H1 (cell line): ENCODE measurements at regions of chr1 and their contacts with region 1.

Region 1: GRCh38 chr1:229258031-229258756 is 12.7 kb upstream of the RAB4A start:
- DNase-seq: peak in 1 of 2 experiments; percentile 75
- H3K4me3 ChIP-seq: no peak overlapping the region
- H3K27ac ChIP-seq: no peak overlapping the region
- H3K4me1 ChIP-seq: peaks cover 0 to 7% (median 2%) of the 10 kb centered on the region in 4 experiments; a peak in 4 of 7 replicates
- H3K27me3 ChIP-seq: no peaks in the 10 kb centered on the region
- CTCF ChIP-seq: peak; percentile 39 to 70 (median 66)
- EP300 ChIP-seq: no peak
- POLR2A ChIP-seq: no peak
- RAD21 ChIP-seq: peak; percentile 89 to 90

Region 2: GRCh38 chr1:228664399-228664914 is 593.7 kb before region 1 on chr1:
- CTCF ChIA-PET with region 1: interaction called, 33 read pairs
- POLR2A ChIA-PET with region 1: interaction called, 3 read pairs
- DNase-seq: peak; percentile 53 to 91
- H3K4me3 ChIP-seq: no peak overlapping the region
- H3K27ac ChIP-seq: no peak overlapping the region
- H3K4me1 ChIP-seq: peaks cover 0 to 2% (median 0%) of the 10 kb centered on the region in 4 experiments; a peak in 1 of 7 replicates
- H3K27me3 ChIP-seq: no peaks in the 10 kb centered on the region
- CTCF ChIP-seq: peak; percentile 34 to 71 (median 64)
- EP300 ChIP-seq: no peak
- POLR2A ChIP-seq: no peak
- RAD21 ChIP-seq: peak; percentile 90 to 94

Region 3: DNA sequence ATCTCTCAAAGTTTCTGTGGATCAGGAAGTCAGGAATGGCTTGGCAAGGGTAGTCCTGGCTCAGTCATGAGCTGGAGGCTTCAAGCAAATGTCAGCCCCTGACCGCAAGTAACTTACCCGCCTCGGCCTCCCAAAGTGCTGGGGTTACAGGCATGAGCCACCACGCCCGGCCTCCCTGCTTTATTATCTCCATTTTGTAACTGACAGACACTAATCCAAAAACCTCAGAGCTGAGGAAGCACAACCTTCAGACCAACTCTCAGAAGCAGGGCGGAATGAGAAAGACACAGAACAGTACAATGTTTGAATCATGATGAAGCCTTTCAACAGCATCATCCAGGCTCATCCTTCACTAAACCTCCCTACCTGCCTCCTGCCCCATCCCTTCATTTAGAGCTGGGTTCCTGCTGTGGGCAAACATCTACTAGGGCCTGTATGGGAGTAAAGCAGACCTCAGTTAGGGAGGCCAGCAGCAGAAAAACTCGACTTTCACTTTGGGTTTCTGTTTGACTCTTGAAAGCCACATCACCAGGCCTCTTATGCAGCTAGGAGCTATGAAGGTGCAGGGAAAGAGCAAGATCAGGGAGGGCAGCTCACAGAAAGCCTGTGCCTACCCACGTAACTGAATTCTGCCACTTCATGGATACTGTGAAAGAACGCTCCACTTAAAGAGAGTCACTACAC is 71.7 kb before region 1 on chr1:
- CTCF ChIA-PET with region 1: no interaction called
- POLR2A ChIA-PET with region 1: no interaction called
- DNase-seq: no peak
- H3K4me3 ChIP-seq: no peak overlapping the region
- H3K27ac ChIP-seq: no peak overlapping the region
- H3K4me1 ChIP-seq: peaks cover 0 to 11% (median 7%) of the 10 kb centered on the region in 4 experiments; a peak in 4 of 7 replicates
- H3K27me3 ChIP-seq: no peaks in the 10 kb centered on the region
- CTCF ChIP-seq: no peak
- EP300 ChIP-seq: no peak
- POLR2A ChIP-seq: no peak
- RAD21 ChIP-seq: no peak

Region 4: GRCh38 chr1:229238674-229239415 is 19.3 kb before region 1 on chr1:
- CTCF ChIA-PET with region 1: interaction called, 11 read pairs
- POLR2A ChIA-PET with region 1: no interaction called
- DNase-seq: peak in 1 of 2 experiments; percentile 45
- H3K4me3 ChIP-seq: no peak overlapping the region
- H3K27ac ChIP-seq: no peak overlapping the region
- H3K4me1 ChIP-seq: peaks cover 1 to 10% (median 6%) of the 10 kb centered on the region in 4 experiments; a peak in 3 of 7 replicates
- H3K27me3 ChIP-seq: no peaks in the 10 kb centered on the region
- CTCF ChIP-seq: no peak
- EP300 ChIP-seq: no peak
- POLR2A ChIP-seq: no peak
- RAD21 ChIP-seq: no peak

Region 5: GRCh38 chr1:229388876-229389580 is 130.8 kb after region 1 on chr1:
- CTCF ChIA-PET with region 1: no interaction called
- POLR2A ChIA-PET with region 1: no interaction called
- DNase-seq: no peak
- H3K4me3 ChIP-seq: no peak overlapping the region
- H3K27ac ChIP-seq: no peak overlapping the region
- H3K4me1 ChIP-seq: no peaks in the 10 kb centered on the region; a peak in 1 of 7 replicates
- H3K27me3 ChIP-seq: no peaks in the 10 kb centered on the region
- CTCF ChIP-seq: no peak
- EP300 ChIP-seq: no peak
- POLR2A ChIP-seq: no peak
- RAD21 ChIP-seq: no peak

Region 6: DNA sequence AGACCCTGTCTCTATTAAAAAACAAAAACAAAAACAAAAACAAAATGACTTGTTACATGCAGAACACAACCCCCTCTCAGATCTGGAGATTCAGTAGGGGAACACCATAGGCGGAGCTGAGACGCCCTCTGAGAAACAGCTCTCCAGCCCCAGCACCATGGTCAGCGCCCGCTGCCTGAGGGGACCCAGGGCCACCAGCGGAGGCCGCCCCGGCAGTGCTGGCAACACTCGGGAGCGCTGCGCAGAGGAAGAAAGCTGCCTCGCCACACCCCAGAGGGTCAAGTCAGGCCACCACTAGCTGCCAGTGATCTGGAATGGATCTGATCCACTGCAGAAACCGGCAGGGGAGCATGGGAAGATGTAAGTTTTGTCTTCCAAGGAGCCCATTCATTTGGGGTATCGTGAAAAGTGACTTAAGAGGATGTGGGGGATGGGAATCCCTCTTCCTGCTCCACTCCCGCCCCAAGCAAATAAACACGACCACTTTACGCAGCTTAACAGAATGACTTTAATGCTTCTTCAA is 172.6 kb after region 1 on chr1:
- CTCF ChIA-PET with region 1: interaction called, 10 read pairs
- POLR2A ChIA-PET with region 1: no interaction called
- DNase-seq: peak; percentile 53 to 95
- H3K4me3 ChIP-seq: peak overlapping the region in 3 of 4 experiments; percentile 15 to 43 (median 23); a peak in 4 of 8 replicates
- H3K27ac ChIP-seq: no peak overlapping the region
- H3K4me1 ChIP-seq: peaks cover 0 to 18% (median 10%) of the 10 kb centered on the region in 4 experiments; a peak in 6 of 7 replicates
- H3K27me3 ChIP-seq: peaks cover 35 to 60% (median 56%) of the 10 kb centered on the region in 4 experiments
- CTCF ChIP-seq: peak; percentile 0 to 25 (median 2); a peak in 3 of 4 replicates
- EP300 ChIP-seq: no peak
- POLR2A ChIP-seq: no peak
- RAD21 ChIP-seq: peak; percentile 29 to 53; a peak in 3 of 4 replicates

Region 7: DNA sequence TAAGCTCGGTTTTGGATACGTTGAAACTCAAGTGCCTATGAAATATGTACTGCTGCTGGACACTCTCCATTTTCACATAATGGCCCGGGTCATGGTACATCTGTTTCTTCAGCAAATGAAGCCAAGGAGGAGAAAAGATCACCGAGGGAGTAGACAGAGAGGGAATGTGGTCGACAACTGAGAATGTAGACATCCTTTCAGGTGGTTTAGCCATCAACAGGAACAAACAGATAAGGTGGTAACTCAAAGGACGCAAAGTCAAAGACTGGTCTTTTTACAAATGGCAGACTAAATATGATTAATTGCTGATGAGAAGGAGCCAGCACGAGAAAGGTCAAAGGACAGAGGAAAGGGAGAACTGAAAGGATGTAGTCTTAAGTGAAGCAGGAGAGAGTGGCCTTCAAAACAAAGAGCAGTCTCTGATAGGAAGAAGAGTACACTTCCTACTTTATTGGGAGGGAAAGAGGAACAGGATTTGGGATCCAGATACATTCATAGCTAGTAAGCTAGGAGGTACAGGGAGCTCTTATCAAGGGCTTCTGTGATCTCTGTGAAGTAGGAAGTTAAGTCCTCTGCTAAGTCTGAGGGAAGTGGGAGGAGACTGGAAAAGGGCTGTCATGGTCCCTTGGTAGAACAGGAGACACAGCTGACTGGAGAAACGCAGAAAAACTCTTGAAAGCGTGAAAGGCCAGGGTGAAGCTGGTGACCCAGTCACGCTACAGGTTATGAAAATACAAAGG is 221.6 kb after region 1 on chr1:
- CTCF ChIA-PET with region 1: interaction called, 69 read pairs
- POLR2A ChIA-PET with region 1: interaction called, 3 read pairs
- DNase-seq: no peak
- H3K4me3 ChIP-seq: no peak overlapping the region
- H3K27ac ChIP-seq: no peak overlapping the region
- H3K4me1 ChIP-seq: no peaks in the 10 kb centered on the region
- H3K27me3 ChIP-seq: no peaks in the 10 kb centered on the region
- CTCF ChIP-seq: no peak
- EP300 ChIP-seq: no peak
- POLR2A ChIP-seq: no peak
- RAD21 ChIP-seq: no peak